ENCODE measurements at regions of chr14 and their contacts with region 1.

Region 1: GRCh38 chr14:50860478-50861086 is 11.3 kb upstream of the ABHD12B start:
- DNase-seq: peak; percentile 66
- H3K4me3 ChIP-seq: peak overlapping the region; percentile 31 to 33
- H3K27ac ChIP-seq: peak overlapping the region; percentile 48 to 66
- H3K4me1 ChIP-seq: no peaks in the 10 kb centered on the region
- H3K27me3 ChIP-seq: no peaks in the 10 kb centered on the region
- CTCF ChIP-seq: peak; percentile 49 to 71 (median 61)
- POLR2A ChIP-seq: no peak

Region 2: DNA sequence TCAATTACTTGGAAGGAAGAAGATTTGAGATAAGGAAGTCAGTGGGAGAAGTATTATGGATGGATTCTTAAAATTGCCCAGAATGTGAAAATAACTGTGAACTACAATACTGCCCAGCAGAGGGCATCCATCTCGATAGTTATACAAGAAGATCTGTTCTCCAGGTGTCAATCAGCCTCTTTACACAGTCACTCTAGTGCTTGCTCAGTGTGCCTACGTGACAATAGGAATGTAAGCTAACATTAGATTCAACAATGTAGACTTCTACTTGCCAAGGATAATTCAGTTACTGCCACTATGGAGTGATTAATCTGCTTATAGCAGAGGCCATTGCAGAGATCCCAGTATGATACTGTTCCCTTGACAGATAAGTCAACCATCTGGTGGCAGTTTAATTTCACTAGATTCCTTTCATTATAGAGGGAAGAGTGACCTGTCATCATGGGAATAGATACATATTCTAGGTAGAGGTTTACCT is 317.6 kb before region 1 on chr14:
- intact Hi-C with region 1: loop called (anchors 5 kb)
- DNase-seq: peak; percentile 44
- H3K4me3 ChIP-seq: no peak overlapping the region
- H3K27ac ChIP-seq: no peak overlapping the region
- H3K4me1 ChIP-seq: no peaks in the 10 kb centered on the region
- H3K27me3 ChIP-seq: no peaks in the 10 kb centered on the region
- CTCF ChIP-seq: peak in 3 of 4 experiments; percentile 45 to 68 (median 67)
- POLR2A ChIP-seq: no peak

Region 3: DNA sequence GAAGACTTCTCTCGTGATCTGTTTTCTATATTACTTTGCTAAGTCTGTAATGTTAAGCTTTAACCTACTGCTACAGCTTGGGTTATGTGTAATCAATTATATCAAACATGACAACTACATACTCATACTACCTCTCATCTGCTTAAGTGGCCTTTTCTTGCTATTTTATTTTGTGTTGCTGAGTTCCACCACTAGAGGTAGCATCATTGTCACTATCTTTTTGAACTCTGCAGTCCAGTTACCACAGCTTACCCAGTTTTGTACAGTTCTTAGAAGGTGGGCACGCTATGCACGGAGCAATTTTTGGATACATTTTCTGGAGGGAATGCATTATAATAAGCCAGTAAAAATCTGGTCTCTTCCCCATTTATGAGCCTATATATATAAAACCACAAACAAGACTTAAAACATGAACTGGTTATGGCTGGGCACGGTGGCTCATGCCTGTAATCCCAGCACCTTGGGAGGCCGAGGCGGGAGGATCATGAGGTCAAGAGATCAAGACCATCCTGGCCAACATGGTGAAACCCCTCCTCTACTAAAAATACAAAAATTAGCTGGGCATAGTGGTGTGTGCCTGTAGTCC is 240.9 kb before region 1 on chr14:
- intact Hi-C with region 1: loop called (anchors 10 kb)
- DNase-seq: no peak
- H3K4me3 ChIP-seq: no peak overlapping the region
- H3K27ac ChIP-seq: no peak overlapping the region
- H3K4me1 ChIP-seq: no peaks in the 10 kb centered on the region
- H3K27me3 ChIP-seq: no peaks in the 10 kb centered on the region
- CTCF ChIP-seq: peak; percentile 14 to 75 (median 68)
- POLR2A ChIP-seq: no peak

Measured in prostate gland (tissue), 2 donors.